Adrenal gland (tissue), 19 donors: ENCODE measurements at regions of chr12 and their contacts with region 1.

Region 1: GRCh38 chr12:106919910-106920544 is 35.7 kb upstream of the TMEM263 start:
- DNase-seq: peak in 1 of 7 donors; percentile 37
- H3K4me3 ChIP-seq: no peak overlapping the region
- H3K27ac ChIP-seq: no peak overlapping the region
- H3K4me1 ChIP-seq: no peaks in the 10 kb centered on the region
- H3K27me3 ChIP-seq: no peaks in the 10 kb centered on the region
- CTCF ChIP-seq: peak; percentile 73 to 92 (median 83)
- POLR2A ChIP-seq: no peak

Region 2: GRCh38 chr12:106386813-106387535 is 533.1 kb before region 1 on chr12:
- intact Hi-C with region 1: loop called (anchors 5 to 10 kb)
- DNase-seq: no peak
- H3K4me3 ChIP-seq: no peak overlapping the region
- H3K27ac ChIP-seq: no peak overlapping the region
- H3K4me1 ChIP-seq: peaks cover 0 to under 1% of the 10 kb centered on the region in 2 donors
- H3K27me3 ChIP-seq: no peaks in the 10 kb centered on the region
- CTCF ChIP-seq: no peak
- POLR2A ChIP-seq: no peak

Region 3: DNA sequence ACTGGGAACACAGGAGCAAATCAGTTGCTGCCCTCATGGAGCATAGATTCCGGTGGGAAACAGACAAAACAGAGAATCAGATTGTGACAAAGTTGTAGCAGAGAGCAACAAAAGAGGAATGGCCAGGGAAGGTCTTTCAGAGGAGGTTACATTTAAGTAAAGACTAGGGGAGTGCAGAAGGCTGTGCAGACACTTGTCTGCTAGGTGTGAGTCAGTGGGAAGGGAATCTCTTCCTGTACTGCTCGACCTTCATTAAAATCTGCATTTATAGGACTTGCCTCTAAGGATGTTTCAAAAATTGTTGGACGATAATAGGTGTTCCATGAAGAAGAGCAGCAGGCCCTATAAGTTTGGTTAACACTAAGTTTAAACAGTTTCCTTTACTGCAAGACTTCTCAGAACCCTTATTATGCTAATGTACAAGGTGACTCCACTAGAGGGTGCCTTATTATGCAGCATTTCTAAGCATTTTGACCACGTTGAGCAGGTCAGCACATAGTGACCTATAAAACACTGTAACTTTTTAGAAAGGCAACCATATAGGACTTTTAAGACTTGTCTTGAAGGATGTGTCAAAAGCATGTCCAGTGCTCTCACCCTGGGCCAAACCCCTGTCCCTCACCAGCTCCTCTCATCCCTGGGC is 237.3 kb before region 1 on chr12:
- intact Hi-C with region 1: loop called in 1 of 2 experiments (anchors 10 kb)
- DNase-seq: no peak
- H3K4me3 ChIP-seq: no peak overlapping the region
- H3K27ac ChIP-seq: no peak overlapping the region
- H3K4me1 ChIP-seq: no peaks in the 10 kb centered on the region
- H3K27me3 ChIP-seq: no peaks in the 10 kb centered on the region
- CTCF ChIP-seq: peak in 5 of 6 experiments; percentile 29 to 45 (median 41)
- POLR2A ChIP-seq: no peak